ENCODE measurements at regions of chr3 and their contacts with region 1.

Region 1: DNA sequence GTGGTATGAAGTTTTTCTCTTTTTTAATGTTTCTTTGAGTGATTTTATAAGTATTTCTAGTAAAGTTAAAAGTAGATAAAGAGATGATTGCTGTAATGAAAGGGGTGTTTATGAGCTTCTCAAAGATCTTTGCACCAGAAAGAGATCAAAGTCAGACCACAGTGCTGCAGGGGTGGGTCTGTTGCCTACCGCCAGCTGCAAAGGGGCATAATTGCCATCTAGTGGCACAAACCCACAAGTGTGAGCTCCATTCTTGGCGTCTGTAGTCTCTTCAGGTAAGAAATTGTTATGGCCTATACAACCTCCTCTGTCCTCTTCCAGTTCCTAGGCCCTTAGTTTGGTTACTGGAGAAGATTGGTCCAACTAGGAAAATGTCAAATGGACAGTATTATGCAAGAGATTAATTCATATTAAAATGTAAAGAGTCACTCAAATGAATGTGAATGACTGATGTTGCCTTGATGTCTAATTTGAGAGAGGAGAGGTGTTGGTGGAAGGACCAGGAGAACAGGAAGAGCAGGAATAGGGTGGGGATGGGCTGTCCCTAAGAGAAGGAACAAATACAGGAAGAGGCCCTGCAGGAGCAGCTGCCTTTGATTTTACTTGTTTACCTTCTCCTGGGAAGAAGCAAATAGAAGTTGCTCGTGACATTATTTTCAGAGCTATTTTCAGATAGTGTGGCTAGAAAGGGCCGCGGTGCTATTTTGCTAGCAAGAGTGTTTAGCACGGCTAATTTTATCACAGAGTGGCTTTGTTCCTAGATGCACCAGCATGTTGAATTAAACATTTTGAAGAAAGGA is 53.0 kb upstream of the GSK3B start:
- DNase-seq: peak; percentile 14 to 70 (median 44)
- H3K4me3 ChIP-seq: no peak overlapping the region
- H3K4me3 Mint-ChIP-seq: no peak overlapping the region
- H3K27ac ChIP-seq: no peak overlapping the region
- H3K27ac Mint-ChIP-seq: peak overlapping the region in 1 of 8 donors; percentile 1
- H3K4me1 ChIP-seq: no peaks in the 10 kb centered on the region
- H3K4me1 Mint-ChIP-seq: peaks cover 4 to 8% (median 5%) of the 10 kb centered on the region in 3 donors
- H3K27me3 ChIP-seq: no peaks in the 10 kb centered on the region
- H3K27me3 Mint-ChIP-seq: no peaks in the 10 kb centered on the region

Region 2: DNA sequence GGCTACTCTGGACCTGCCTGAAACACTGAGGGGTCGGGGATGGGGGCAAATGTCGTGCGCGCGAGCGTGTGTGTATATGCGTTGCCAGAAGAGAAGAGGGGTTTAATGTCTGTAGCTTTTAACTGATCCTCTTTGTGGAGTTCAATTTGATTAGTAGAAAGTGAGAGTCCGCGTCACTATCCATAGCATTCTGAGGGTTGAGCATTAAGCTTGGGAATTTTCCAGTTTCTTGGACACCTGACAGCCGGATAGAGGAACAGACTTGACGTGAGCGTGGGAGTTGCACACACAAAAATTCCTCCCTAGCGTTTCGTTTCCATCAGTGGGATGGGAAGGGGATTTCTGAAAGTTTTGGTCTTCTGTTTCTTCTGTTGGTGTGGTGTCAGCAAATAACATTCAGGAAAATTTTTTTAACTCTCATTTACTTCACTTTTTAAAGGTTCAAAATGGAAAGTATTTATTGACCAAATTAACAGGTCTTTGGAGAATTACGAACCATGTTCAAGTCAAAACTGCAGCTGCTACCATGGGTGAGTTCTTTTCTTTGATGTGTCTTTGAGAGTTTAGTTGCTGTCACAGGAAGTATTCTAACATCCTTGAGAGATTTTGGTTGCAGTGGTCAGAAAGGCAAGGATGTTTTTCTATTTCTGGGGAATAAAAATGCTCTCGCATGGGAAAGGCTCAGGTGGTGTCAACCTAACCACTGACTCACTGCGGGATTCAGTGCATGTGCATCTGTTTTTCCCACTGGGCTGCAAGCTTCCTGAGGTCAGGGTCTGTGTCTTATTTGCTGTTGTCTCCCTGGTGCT is 677.7 kb before region 1 on chr3:
- CTCF ChIA-PET with region 1: no interaction called
- POLR2A ChIA-PET with region 1: no interaction called
- DNase-seq: peak in 1 of 5 donors; percentile 28
- H3K4me3 ChIP-seq: peak overlapping the region; percentile 95
- H3K4me3 Mint-ChIP-seq: peak overlapping the region; percentile 92 to 97 (median 95)
- H3K27ac ChIP-seq: peak overlapping the region; percentile 88
- H3K27ac Mint-ChIP-seq: peak overlapping the region; percentile 83 to 97 (median 92)
- H3K4me1 ChIP-seq: peaks cover 26% of the 10 kb centered on the region
- H3K4me1 Mint-ChIP-seq: peaks cover 28 to 44% (median 36%) of the 10 kb centered on the region in 3 donors
- H3K27me3 ChIP-seq: no peaks in the 10 kb centered on the region
- H3K27me3 Mint-ChIP-seq: no peaks in the 10 kb centered on the region

Region 3: GRCh38 chr3:119891944-119892721 is 255.1 kb before region 1 on chr3:
- CTCF ChIA-PET with region 1: interaction called, 51 read pairs
- POLR2A ChIA-PET with region 1: no interaction called
- DNase-seq: peak in 4 of 5 donors; percentile 6 to 51 (median 46)
- H3K4me3 ChIP-seq: no peak overlapping the region
- H3K4me3 Mint-ChIP-seq: no peak overlapping the region
- H3K27ac ChIP-seq: no peak overlapping the region
- H3K27ac Mint-ChIP-seq: peak overlapping the region in 1 of 8 donors; percentile 33
- H3K4me1 ChIP-seq: no peaks in the 10 kb centered on the region
- H3K4me1 Mint-ChIP-seq: peaks cover 8 to 20% (median 11%) of the 10 kb centered on the region in 3 donors
- H3K27me3 ChIP-seq: no peaks in the 10 kb centered on the region
- H3K27me3 Mint-ChIP-seq: no peaks in the 10 kb centered on the region

Region 4: DNA sequence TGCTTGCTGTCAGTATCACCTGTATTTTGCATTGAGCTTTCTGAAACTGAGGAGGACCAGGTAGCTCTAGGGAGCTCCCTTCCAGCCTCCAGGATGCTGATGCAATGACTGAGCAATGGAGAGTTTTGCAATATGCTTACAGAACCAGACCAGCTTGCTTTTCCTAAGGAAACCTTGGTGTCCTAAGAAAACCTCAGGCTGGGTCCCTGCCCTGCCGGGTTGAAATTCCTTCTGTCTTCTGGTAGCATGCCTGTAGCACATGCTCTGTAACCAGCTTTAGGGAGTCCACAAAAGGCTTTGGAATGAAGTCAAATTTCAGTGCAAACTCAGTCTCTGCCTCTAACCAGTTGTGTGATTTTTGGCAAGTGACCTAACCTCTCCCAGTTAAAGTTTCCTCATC is 12.8 kb after region 1 on chr3:
- CTCF ChIA-PET with region 1: interaction called, 10 read pairs
- POLR2A ChIA-PET with region 1: no interaction called
- DNase-seq: no peak
- H3K4me3 ChIP-seq: no peak overlapping the region
- H3K4me3 Mint-ChIP-seq: no peak overlapping the region
- H3K27ac ChIP-seq: no peak overlapping the region
- H3K27ac Mint-ChIP-seq: no peak overlapping the region
- H3K4me1 ChIP-seq: no peaks in the 10 kb centered on the region
- H3K4me1 Mint-ChIP-seq: no peaks in the 10 kb centered on the region
- H3K27me3 ChIP-seq: no peaks in the 10 kb centered on the region
- H3K27me3 Mint-ChIP-seq: peaks cover 7 to 9% of the 10 kb centered on the region in 2 donors

Measured in CD8-positive, alpha-beta memory T cell (primary cell).